Activated T-helper 2 cell treated with anti-CD3 and anti-CD28 coated beads, Interferon-gamma antibody, Interleukin-2, Interleukin-4, amounts not matched to agents 10 μg/mL and 5 μg/mL and 100 μg/mL, durations not matched to agents 14 hours and 24 hours and 36 hours (primary cell): ENCODE measurements at regions of chr1 and their contacts with region 1.

Region 1: DNA sequence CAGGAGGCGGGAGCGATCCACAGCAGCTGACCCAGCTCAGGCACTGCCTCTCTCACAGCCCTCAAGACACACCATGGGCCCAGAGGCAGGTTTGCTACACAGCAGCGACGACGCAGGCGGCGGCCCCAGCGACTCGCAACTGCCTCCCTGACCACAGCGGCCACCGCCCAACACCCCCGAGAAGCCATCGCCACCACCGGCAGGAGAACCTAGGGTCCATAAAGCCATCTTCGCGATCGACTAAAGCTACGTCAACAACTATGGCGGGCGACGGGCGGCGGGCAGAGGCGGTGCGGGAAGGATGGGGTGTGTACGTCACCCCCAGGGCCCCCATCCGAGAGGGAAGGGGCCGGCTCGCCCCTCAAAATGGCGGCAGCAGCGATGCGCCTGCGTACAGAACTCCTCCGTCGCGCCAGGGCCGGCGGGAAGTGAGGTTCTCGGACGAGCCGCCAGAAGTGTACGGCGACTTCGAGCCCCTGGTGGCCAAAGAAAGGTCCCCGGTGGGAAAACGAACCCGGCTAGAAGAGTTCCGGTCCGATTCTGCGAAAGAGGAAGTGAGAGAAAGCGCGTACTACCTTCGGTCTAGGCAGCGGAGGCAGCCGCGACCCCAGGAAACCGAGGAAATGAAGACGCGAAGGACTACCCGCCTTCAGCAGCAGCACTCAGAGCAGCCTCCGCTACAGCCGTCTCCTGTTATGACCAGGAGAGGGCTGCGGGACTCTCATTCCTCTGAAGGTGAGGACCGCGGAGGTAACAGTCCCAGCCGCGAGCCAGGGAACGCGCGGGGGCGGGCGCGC is at the start of gene TOR1AIP1:
- DNase-seq: peak; percentile 98
- H3K4me3 Mint-ChIP-seq: peak within 1 kb of the TSS; percentile 85
- H3K27ac Mint-ChIP-seq: peak within 1 kb of the TSS; percentile 97
- H3K4me1 Mint-ChIP-seq: peaks cover 42% of the 10 kb centered on the region
- H3K27me3 Mint-ChIP-seq: no peaks in the 10 kb centered on the region
- total RNA-seq, gene TOR1AIP1: 72.2 and 82.5 TPM in 2 replicates

Region 2: DNA sequence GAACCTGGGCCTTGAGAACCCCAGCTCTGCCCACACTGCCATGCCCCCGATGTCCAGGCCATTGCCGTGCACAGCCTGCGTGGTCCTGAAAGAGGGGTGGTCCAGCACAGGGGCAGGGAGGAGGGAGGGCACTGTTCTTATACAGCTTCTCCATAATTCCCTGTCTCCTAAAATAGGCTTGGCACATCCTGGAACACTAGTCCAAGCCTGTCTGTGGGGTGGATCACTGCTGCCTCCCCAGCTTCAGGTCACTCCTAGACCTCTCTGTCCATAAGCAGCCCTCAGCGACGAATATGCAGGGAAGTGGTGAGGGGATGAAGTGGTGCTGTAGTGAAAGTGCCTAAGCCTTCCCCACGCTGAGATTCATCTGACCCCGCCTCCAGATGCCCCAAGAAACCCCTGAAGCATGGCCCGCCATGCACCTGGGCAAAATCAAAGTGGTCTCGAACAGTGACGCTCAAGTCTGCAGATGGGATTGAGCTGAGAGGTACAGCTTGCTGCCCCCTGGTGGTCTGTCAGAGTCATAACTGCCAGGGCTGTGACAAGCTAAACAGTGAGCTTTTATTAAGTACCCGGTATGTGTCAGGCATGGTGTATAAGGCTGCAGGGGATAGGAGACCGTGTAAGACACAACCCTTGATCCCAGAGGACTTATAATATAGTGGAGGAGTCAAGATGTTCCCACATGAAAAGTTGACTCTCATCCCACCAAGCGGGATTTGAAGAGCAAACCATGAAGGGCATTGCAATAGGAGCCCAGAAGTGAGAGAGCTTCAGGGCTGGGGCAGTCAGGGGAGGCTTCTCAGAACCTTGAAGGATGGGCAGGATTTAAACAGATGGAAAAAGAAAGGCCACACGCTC is 72.7 kb before region 1 on chr1:
- intact Hi-C with region 1: loop called (anchors 2 kb)
- DNase-seq: peak; percentile 35
- H3K4me3 Mint-ChIP-seq: no peak overlapping the region
- H3K27ac Mint-ChIP-seq: no peak overlapping the region
- H3K4me1 Mint-ChIP-seq: peaks cover 4% of the 10 kb centered on the region
- H3K27me3 Mint-ChIP-seq: peaks cover 8% of the 10 kb centered on the region

Region 3: GRCh38 chr1:179954493-179955297 is 72.3 kb after region 1 on chr1 and contains the start of gene CEP350:
- intact Hi-C with region 1: loop called (anchors 1 kb)
- DNase-seq: peak; percentile 98
- H3K4me3 Mint-ChIP-seq: peak within 1 kb of the TSS; percentile 87
- H3K27ac Mint-ChIP-seq: peak within 1 kb of the TSS; percentile 98
- H3K4me1 Mint-ChIP-seq: peaks cover 34% of the 10 kb centered on the region
- H3K27me3 Mint-ChIP-seq: no peaks in the 10 kb centered on the region
- total RNA-seq, gene CEP350: 41.2 and 43.7 TPM in 2 replicates

Region 4: GRCh38 chr1:180154325-180155181 is 272.1 kb after region 1 on chr1 and contains the start of gene QSOX1:
- intact Hi-C with region 1: loop called (anchors 1 kb)
- DNase-seq: peak; percentile 86
- H3K4me3 Mint-ChIP-seq: peak within 1 kb of the TSS; percentile 89
- H3K27ac Mint-ChIP-seq: peak within 1 kb of the TSS; percentile 90
- H3K4me1 Mint-ChIP-seq: peaks cover 36% of the 10 kb centered on the region
- H3K27me3 Mint-ChIP-seq: peaks cover 3% of the 10 kb centered on the region
- total RNA-seq, gene QSOX1: 58.7 and 62.6 TPM in 2 replicates

Region 5: GRCh38 chr1:180178511-180179161 is 296.2 kb after region 1 on chr1:
- intact Hi-C with region 1: loop called (anchors 5 kb)
- DNase-seq: peak; percentile 28
- H3K4me3 Mint-ChIP-seq: no peak overlapping the region
- H3K27ac Mint-ChIP-seq: no peak overlapping the region
- H3K4me1 Mint-ChIP-seq: no peaks in the 10 kb centered on the region
- H3K27me3 Mint-ChIP-seq: no peaks in the 10 kb centered on the region

Region 6: DNA sequence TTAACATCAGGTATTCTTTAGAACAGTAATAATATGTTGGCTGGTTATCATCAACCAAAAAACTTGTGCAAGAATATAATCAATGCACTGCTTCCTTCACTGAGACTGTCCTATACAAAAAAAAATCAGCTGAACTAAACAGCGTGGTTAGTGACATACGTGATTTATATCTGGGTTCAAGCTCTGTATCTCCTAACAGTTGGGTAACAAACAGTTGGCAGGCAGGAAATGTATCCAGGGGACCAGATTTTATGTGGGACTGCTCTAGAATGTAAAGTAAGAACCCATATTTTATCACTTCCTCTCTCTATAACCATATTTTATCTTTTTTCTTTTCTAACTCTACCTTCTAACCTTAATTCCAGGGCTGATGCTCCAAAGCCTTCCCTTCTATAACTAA is 611.9 kb after region 1 on chr1:
- intact Hi-C with region 1: loop called (anchors 10 kb)
- DNase-seq: no peak
- H3K4me3 Mint-ChIP-seq: no peak overlapping the region
- H3K27ac Mint-ChIP-seq: no peak overlapping the region
- H3K4me1 Mint-ChIP-seq: peaks cover 8% of the 10 kb centered on the region
- H3K27me3 Mint-ChIP-seq: no peaks in the 10 kb centered on the region